ENCODE measurements at regions of chr1 and their contacts with region 1.

Region 1: DNA sequence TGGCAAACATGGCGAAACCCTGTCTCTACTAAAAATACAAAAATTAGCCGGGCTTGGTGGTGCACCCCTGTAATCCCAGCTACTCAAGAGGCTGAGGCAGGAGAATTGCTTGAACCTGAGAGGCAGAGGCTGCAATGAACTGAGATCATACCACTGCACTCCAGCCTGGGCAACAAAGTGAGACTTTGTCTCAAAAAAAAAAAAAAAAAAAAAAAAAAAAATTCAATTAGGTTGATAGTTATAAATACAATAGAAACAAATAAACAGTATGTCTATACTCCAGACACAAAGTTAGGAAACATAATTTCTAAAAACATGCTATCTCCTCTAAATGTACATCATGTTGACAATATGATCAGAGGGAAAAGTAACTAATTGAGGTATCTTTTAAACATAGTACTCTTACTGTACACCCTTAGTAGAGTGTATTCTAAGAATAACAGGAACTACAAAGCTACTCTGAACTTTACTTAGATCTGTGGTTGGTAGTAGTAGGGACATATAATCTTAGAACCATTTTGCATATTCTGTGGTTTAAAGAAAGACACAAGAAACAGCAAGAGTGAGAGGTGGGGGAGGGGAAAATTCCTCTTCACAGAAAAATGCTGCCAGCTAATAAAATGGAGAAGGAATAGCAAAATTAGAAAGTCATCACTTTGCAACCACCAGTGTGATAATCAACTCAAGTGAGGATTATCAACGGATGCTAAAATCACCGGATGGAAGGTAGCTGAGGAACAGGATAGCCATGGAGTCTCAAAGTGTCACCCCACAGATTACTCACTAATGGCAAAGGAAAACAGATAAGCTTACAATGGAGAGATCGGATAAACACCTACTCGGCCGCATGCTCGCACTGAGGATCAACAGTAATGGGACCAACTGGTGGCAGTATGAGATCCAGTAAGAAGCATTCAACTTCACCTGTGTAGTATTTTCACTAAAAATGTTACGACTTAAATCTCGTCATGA is 35.0 kb downstream of the MTOR start:
- DNase-seq: peak; percentile 54
- ATAC-seq: peak; percentile 77
- H3K4me3 ChIP-seq: peak overlapping the region in 2 of 5 experiments; percentile 21 to 42
- H3K4me3 Mint-ChIP-seq: peak overlapping the region; percentile 70
- H3K27ac ChIP-seq: peak overlapping the region; percentile 33 to 72
- H3K27ac Mint-ChIP-seq: peak overlapping the region; percentile 82
- H3K4me1 ChIP-seq: peaks cover 41 to 43% of the 10 kb centered on the region in 2 donors
- H3K4me1 Mint-ChIP-seq: peaks cover 51% of the 10 kb centered on the region
- H3K27me3 ChIP-seq: no peaks in the 10 kb centered on the region
- H3K27me3 Mint-ChIP-seq: no peaks in the 10 kb centered on the region
- CTCF ChIP-seq: no peak

Region 2: GRCh38 chr1:11248155-11248554 is 20.8 kb after region 1 on chr1:
- CTCF ChIA-PET with region 1: interaction called, 29 read pairs
- POLR2A ChIA-PET with region 1: no interaction called
- intact Hi-C with region 1: no loop called
- DNase-seq: no peak
- ATAC-seq: no peak
- H3K4me3 ChIP-seq: no peak overlapping the region
- H3K4me3 Mint-ChIP-seq: no peak overlapping the region
- H3K27ac ChIP-seq: no peak overlapping the region
- H3K27ac Mint-ChIP-seq: no peak overlapping the region
- H3K4me1 ChIP-seq: no peaks in the 10 kb centered on the region
- H3K4me1 Mint-ChIP-seq: no peaks in the 10 kb centered on the region
- H3K27me3 ChIP-seq: no peaks in the 10 kb centered on the region
- H3K27me3 Mint-ChIP-seq: no peaks in the 10 kb centered on the region
- CTCF ChIP-seq: no peak

Measured in B cell (primary cell).